ENCODE measurements at regions of chr1 and their contacts with region 1.

Region 1: DNA sequence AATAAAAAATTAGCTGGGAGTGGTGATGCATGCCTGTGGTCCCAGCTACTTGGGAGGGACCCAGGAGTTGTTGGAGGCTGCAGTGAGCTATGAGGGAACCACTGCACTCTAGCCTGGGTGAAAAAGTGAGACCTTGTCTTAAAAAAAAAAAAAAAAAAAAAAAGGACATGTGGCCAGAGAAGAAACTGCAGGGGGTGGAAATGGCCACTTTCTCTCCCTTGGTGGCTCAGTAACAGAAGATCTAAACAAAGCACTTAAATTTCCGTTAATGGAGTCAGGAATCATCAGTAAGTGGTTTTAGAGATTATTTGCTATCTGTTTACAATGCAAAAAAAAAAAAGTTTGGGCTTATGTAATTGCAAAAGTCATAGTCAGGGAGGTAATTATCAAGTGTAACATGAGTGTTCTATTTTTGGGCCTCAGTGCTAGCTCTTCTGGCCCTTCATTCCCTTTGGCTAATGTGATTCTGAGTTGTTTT is 19.3 kb upstream of the OPRD1 start:
- DNase-seq: no peak
- H3K4me3 ChIP-seq: no peak overlapping the region
- H3K27ac ChIP-seq: no peak overlapping the region
- H3K4me1 ChIP-seq: no peaks in the 10 kb centered on the region
- H3K27me3 ChIP-seq: no peaks in the 10 kb centered on the region
- CTCF ChIP-seq: no peak
- EP300 ChIP-seq: no peak
- POLR2A ChIP-seq: no peak

Region 2: GRCh38 chr1:27999055-27999454 is 793.6 kb before region 1 on chr1:
- intact Hi-C with region 1: no loop called
- DNase-seq: no peak
- H3K4me3 ChIP-seq: no peak overlapping the region
- H3K27ac ChIP-seq: no peak overlapping the region
- H3K4me1 ChIP-seq: no peaks in the 10 kb centered on the region
- H3K27me3 ChIP-seq: no peaks in the 10 kb centered on the region
- CTCF ChIP-seq: no peak
- EP300 ChIP-seq: no peak
- POLR2A ChIP-seq: no peak

Region 3: GRCh38 chr1:28860332-28861073 is 67.8 kb after region 1 on chr1:
- intact Hi-C with region 1: loop called in 2 of 4 experiments (anchors 5 to 10 kb)
- DNase-seq: no peak
- H3K4me3 ChIP-seq: no peak overlapping the region
- H3K27ac ChIP-seq: no peak overlapping the region
- H3K4me1 ChIP-seq: no peaks in the 10 kb centered on the region
- H3K27me3 ChIP-seq: no peaks in the 10 kb centered on the region
- CTCF ChIP-seq: no peak
- EP300 ChIP-seq: no peak
- POLR2A ChIP-seq: no peak

Region 4: GRCh38 chr1:28865997-28866650 is 73.4 kb after region 1 on chr1:
- intact Hi-C with region 1: loop called in 3 of 4 experiments (anchors 5 to 10 kb)
- DNase-seq: no peak
- H3K4me3 ChIP-seq: no peak overlapping the region
- H3K27ac ChIP-seq: no peak overlapping the region
- H3K4me1 ChIP-seq: no peaks in the 10 kb centered on the region
- H3K27me3 ChIP-seq: no peaks in the 10 kb centered on the region
- CTCF ChIP-seq: no peak
- EP300 ChIP-seq: no peak
- POLR2A ChIP-seq: no peak

Region 5: DNA sequence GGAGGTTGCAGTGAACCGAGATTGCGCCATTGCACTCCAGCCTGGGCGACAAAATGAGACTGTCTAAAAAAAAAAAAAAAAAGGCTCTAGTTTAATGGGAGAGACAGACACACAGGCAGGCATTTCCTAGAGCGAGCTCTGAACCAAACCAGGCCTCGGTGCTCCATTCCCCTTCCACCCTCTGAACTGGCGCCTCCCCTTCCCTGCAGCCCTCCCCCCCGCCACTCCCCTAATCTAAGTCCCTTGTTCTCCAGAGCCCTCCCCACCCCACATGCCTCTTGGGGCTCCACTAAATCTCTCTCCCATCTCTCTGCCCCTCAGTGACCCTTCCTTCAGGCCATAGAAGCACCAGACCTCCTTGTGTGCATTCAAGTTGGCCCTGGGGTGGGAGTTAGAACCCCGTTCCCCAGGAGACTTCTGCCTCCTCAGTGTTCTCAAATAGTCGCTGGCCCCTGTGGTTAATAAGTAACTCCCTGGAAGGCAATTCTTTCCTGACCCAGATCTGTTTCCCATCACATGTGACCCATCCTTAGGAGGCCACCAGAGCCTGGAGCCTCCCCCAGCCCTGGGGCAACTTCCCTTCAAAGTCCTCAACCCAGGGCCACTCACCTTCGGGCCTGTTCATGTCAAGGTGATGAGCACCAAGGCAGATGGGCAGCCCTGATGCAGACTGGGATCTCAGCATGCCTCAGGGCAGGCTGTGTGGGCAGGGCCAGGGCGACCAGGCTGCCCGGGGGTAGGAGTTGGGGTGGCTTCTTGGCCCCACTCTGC is 79.1 kb after region 1 on chr1:
- intact Hi-C with region 1: loop called in 3 of 4 experiments (anchors 5 to 10 kb)
- DNase-seq: no peak
- H3K4me3 ChIP-seq: no peak overlapping the region
- H3K27ac ChIP-seq: no peak overlapping the region
- H3K4me1 ChIP-seq: no peaks in the 10 kb centered on the region
- H3K27me3 ChIP-seq: no peaks in the 10 kb centered on the region
- CTCF ChIP-seq: no peak
- EP300 ChIP-seq: no peak
- POLR2A ChIP-seq: no peak

Region 6: GRCh38 chr1:28877132-28877781 is 84.6 kb after region 1 on chr1:
- intact Hi-C with region 1: loop called in 2 of 4 experiments (anchors 5 kb)
- DNase-seq: peak; percentile 72 to 86 (median 80)
- H3K4me3 ChIP-seq: no peak overlapping the region
- H3K27ac ChIP-seq: no peak overlapping the region
- H3K4me1 ChIP-seq: peaks cover 1% of the 10 kb centered on the region
- H3K27me3 ChIP-seq: no peaks in the 10 kb centered on the region
- CTCF ChIP-seq: peak; percentile 59 to 89 (median 80)
- EP300 ChIP-seq: no peak
- POLR2A ChIP-seq: no peak